ENCODE measurements at regions of chr3 and their contacts with region 1.

Region 1: DNA sequence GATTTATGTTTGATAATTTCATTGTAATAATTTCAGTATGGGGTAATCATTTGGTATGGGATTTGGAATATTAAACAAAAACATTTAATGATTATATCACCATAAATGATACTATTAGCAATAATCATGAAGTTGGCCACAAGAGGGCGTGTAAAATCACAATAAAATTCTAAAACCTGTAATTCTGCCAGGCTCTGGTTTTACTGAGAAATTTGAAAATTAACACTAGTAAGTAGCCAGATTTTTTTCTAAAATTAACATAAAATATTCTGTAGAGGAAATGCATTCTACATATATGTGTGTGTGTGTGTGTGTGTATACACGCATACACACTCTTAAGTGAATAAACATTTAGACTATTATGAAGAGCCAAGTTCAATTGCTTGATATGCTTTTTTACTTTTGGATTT is 40.5 kb downstream of the FEZF2 start:
- DNase-seq: peak; percentile 6
- H3K4me3 Mint-ChIP-seq: no peak overlapping the region
- H3K27ac Mint-ChIP-seq: no peak overlapping the region
- H3K4me1 Mint-ChIP-seq: no peaks in the 10 kb centered on the region
- H3K27me3 Mint-ChIP-seq: peaks cover 3% of the 10 kb centered on the region

Region 2: GRCh38 chr3:62558549-62559112 is 225.8 kb after region 1 on chr3:
- CTCF ChIA-PET with region 1: interaction called, 3 read pairs
- intact Hi-C with region 1: loop called (anchors 1 kb)
- DNase-seq: peak; percentile 10
- H3K4me3 Mint-ChIP-seq: no peak overlapping the region
- H3K27ac Mint-ChIP-seq: no peak overlapping the region
- H3K4me1 Mint-ChIP-seq: no peaks in the 10 kb centered on the region
- H3K27me3 Mint-ChIP-seq: peaks cover 4% of the 10 kb centered on the region